WTC11 (cell line): ENCODE measurements at regions of chr3 and their contacts with region 1.

Region 1: GRCh38 chr3:56347219-56347871 is 120.9 kb downstream of the ERC2 start:
- DNase-seq: peak; percentile 92
- ATAC-seq: peak; percentile 96
- H3K4me3 Mint-ChIP-seq: no peak overlapping the region
- H3K27ac Mint-ChIP-seq: no peak overlapping the region
- H3K4me1 Mint-ChIP-seq: peaks cover 15% of the 10 kb centered on the region
- H3K27me3 Mint-ChIP-seq: no peaks in the 10 kb centered on the region
- CTCF ChIP-seq: peak; percentile 90

Region 2: DNA sequence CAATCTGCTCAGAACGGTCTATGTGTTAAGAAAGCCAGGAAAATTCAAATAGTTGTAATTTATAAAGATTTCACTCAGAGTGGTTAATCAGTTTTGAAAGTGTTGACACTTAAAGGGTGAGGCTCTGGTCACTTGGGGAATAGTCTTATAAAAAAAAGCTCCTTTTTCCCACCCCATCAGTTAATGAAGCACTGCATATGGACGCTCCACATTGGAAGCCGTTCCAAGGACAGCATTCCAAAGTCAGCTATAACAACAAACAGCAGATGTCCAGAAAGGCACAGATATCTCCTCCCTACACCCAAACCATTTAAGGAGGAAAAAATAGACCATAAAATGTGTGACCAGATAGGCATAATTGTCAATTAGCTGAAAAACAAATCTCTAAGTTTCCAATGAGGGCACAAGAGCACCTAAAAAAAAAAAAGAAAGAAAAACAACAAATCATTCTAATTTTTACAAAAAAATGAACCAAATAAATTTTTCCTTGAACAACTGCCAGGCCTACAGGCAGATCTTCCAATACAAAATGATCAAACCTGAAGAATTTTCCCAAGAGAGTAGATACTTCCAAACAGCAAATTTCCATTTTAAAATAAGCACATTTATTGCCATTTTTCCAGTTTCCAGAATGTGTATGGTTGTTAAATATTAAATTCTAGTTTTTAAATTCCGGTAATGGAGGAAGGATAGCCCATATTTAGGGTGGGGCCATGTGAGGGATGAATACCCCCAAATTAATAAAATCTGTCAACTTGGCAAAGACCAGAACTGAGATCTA is 77.4 kb before region 1 on chr3:
- CTCF ChIA-PET with region 1: no interaction called
- POLR2A ChIA-PET with region 1: no interaction called
- DNase-seq: no peak
- ATAC-seq: no peak
- H3K4me3 Mint-ChIP-seq: no peak overlapping the region
- H3K27ac Mint-ChIP-seq: no peak overlapping the region
- H3K4me1 Mint-ChIP-seq: no peaks in the 10 kb centered on the region
- H3K27me3 Mint-ChIP-seq: no peaks in the 10 kb centered on the region
- CTCF ChIP-seq: no peak

Region 3: GRCh38 chr3:56370991-56371775 is 23.8 kb after region 1 on chr3:
- CTCF ChIA-PET with region 1: interaction called, 25 read pairs
- POLR2A ChIA-PET with region 1: no interaction called
- DNase-seq: no peak
- ATAC-seq: no peak
- H3K4me3 Mint-ChIP-seq: no peak overlapping the region
- H3K27ac Mint-ChIP-seq: peak overlapping the region; percentile 48; the same call in 1 of the 2 replicates
- H3K4me1 Mint-ChIP-seq: peaks cover 58% of the 10 kb centered on the region
- H3K27me3 Mint-ChIP-seq: no peaks in the 10 kb centered on the region
- CTCF ChIP-seq: no peak

Region 4: GRCh38 chr3:56423661-56424099 is 76.3 kb after region 1 on chr3:
- CTCF ChIA-PET with region 1: interaction called, 13 read pairs
- POLR2A ChIA-PET with region 1: no interaction called
- DNase-seq: no peak
- ATAC-seq: no peak
- H3K4me3 Mint-ChIP-seq: no peak overlapping the region
- H3K27ac Mint-ChIP-seq: 0 out of 2 replicates have a peak overlapping the region, but pooled peaks have one; percentile 22
- H3K4me1 Mint-ChIP-seq: peaks cover 15% of the 10 kb centered on the region
- H3K27me3 Mint-ChIP-seq: no peaks in the 10 kb centered on the region
- CTCF ChIP-seq: no peak

Region 5: DNA sequence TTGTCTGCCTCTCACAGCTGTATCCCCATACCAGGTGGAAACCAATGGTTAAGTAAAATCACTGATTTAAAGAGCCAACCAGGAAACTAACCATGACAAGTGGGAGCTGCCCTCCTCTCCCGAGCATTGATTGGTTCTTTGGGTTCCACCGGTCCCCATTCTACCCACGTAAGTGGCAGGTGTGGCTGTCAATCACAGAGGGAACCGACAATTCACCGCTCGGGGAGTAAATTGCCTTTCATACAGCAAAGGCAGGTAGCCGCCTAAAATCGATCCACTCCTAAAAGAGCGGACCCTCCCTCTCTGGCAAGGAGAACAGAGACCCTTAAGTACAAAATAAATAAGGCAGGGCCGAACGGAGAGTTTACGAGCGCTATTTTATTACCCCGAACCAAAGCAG is 119.8 kb after region 1 on chr3:
- CTCF ChIA-PET with region 1: interaction called, 10 read pairs
- POLR2A ChIA-PET with region 1: no interaction called
- DNase-seq: peak; percentile 87
- ATAC-seq: peak; percentile 81
- H3K4me3 Mint-ChIP-seq: peak overlapping the region; percentile 95
- H3K27ac Mint-ChIP-seq: peak overlapping the region; percentile 63; the same call in 1 of the 2 replicates
- H3K4me1 Mint-ChIP-seq: peaks cover 9% of the 10 kb centered on the region
- H3K27me3 Mint-ChIP-seq: no peaks in the 10 kb centered on the region
- CTCF ChIP-seq: no peak

Region 6: GRCh38 chr3:56629047-56629446 is 281.7 kb after region 1 on chr3:
- CTCF ChIA-PET with region 1: no interaction called
- POLR2A ChIA-PET with region 1: no interaction called
- DNase-seq: no peak
- ATAC-seq: no peak
- H3K4me3 Mint-ChIP-seq: no peak overlapping the region
- H3K27ac Mint-ChIP-seq: no peak overlapping the region
- H3K4me1 Mint-ChIP-seq: no peaks in the 10 kb centered on the region
- H3K27me3 Mint-ChIP-seq: no peaks in the 10 kb centered on the region
- CTCF ChIP-seq: no peak

Region 7: DNA sequence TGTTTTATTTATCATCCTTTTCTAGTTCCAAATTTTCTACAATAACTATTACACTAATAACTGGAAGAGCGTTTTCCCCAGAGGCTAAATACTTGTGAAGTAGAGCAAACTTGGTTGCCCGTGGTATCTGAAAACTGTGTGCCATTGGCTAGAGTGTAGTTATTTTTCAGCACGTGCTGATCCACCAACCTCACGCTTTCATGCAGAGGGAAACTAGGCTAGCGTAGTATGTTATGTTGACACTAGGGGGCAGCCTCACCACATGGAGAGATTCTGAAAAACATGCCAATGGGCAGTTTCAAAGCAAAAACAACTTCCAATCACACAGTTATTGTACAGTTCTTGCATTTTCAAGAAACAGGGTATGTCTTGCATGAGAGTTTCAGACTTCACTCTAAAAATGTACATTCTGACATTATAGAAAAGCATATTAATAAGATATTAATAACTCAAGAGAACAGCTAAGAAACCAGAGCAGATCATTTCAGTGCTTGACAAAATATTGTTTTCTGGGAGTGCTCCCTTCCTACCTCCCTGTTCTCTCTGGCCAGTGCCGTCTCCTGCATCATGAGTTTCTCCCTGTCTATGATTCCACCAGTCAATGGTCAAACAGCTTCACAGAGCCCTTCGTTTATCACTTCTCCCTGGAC is 752.8 kb after region 1 on chr3:
- CTCF ChIA-PET with region 1: no interaction called
- POLR2A ChIA-PET with region 1: no interaction called
- DNase-seq: peak; percentile 70
- ATAC-seq: peak; percentile 69
- H3K4me3 Mint-ChIP-seq: no peak overlapping the region
- H3K27ac Mint-ChIP-seq: peak overlapping the region; percentile 72
- H3K4me1 Mint-ChIP-seq: peaks cover 25% of the 10 kb centered on the region
- H3K27me3 Mint-ChIP-seq: no peaks in the 10 kb centered on the region
- CTCF ChIP-seq: peak; percentile 93